GM10248 (cell line): ENCODE measurements at regions of chr3 and their contacts with region 1.

Region 1: GRCh38 chr3:64462203-64462602 is 225.6 kb downstream of the ADAMTS9 start:
- DNase-seq: no peak
- CTCF ChIP-seq: no peak

Region 2: DNA sequence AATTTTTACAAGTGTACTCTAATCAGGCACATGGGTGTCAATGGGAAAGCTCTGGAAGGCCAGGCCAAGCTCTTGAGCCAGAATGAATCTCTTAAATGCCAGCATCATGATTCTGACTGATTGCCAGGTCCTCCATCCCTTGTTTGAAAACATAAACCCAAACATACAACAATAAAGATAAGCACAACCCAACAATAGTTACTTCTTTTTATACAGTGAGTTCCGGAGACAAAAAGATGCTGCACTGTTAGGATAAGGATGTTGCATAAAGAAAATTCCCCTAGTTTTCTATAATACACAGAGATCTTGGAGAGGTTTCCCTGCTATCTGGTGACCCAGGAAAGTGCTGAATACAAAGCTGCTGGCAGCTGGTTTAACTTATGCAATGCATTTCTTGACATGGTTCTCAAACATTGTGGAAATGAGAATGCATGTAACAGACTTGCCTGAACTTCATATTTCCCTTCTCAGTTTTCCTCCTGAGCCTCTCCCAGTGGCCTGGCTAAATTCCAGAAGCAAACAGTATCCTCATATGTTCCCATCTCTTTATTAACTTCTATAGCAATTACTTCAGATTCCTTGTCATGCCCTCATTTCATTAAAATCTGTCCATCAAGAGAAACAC is 56.9 kb before region 1 on chr3:
- CTCF ChIA-PET with region 1: interaction called, 10 read pairs
- POLR2A ChIA-PET with region 1: no interaction called
- DNase-seq: no peak
- CTCF ChIP-seq: no peak

Region 3: DNA sequence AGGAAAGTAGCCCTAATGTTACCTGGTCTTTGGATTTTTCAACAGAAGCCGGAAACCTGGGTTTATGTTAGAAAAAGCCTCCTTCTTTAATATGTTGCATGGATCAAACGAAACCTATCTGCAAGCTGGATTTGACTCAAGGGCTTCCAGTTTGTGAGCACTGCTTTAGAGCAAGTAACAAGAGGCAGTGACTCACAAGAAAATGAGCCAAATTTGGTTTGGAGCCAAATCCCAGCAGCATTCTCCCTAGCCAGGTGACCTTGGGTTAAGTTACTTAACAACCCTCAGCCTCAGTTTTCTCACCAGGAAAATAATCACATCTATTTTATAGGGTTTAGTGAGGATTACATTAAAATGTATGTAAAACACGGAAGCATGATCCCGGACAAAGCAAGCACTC is 21.7 kb before region 1 on chr3:
- CTCF ChIA-PET with region 1: interaction called, 21 read pairs
- POLR2A ChIA-PET with region 1: no interaction called
- DNase-seq: no peak
- CTCF ChIP-seq: no peak

Region 4: DNA sequence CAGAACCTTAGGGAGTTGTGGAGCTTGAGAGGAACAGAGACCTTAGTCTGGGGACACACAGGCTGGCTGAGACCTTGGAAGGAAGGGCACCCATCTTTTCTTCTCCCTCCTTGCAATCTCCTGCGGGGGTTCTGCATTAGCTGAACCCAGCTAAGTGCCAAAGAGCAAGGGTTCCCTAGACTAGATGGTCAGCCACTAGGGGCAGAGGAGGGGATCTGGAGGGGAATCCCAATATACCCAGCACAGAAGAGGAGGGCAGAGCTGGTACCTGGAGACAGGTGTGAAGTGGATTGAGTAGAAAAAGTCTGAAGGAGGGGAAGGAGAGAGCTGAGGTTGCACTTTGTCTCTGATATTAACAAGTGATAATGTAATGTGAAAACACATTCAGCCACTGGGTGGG is 12.8 kb after region 1 on chr3:
- CTCF ChIA-PET with region 1: interaction called, 24 read pairs
- POLR2A ChIA-PET with region 1: no interaction called
- DNase-seq: no peak
- CTCF ChIP-seq: no peak